SK-N-SH (cell line): ENCODE measurements at regions of chr11 and their contacts with region 1.

Region 1: DNA sequence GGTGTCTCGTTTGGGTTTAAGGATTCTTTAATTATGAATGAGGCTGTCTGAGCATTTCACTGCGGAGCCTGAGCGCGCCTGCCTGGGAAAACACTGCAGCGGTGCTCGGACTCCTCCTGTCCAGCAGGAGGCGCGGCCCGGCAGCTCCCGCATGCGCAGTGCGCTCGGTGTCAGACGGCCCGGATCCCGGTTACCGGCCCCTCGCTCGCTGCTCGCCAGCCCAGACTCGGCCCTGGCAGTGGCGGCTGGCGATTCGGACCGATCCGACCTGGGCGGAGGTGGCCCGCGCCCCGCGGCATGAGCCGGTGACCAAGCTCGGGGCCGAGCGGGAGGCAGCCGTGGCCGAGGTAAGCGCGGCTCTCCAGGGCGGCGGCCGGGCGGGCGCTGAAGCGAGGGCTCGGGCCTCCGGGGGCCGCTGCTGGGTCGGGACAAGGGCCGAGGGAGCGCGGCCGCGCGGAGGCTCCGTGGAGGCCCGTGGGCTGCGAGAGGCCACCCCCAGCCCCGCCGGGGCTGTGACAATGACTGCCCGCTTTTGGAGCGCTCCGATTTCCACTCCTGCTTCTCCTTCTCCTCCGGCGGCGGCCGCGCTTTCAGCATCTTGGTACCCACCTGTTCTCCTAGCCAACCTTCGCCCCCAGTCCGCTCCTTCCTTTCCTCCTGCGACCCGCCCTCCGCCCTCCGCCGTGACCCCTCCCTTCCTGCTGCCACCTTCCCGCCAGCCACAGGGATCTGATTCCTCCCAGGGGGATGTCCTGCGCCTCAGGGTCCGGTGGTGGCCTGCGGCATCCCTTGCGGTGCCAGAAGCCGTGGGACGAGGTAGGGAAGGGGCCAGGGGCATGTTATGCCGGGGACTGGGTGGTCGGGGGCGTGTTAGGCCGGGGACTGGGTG is at the start of gene EXT2:
- DNase-seq: peak; percentile 97
- H3K4me3 ChIP-seq: peak within 1 kb of the TSS; percentile 71 to 91
- H3K27ac ChIP-seq: peak within 1 kb of the TSS; percentile 24 to 48; a peak in 2 of 4 replicates
- H3K4me1 ChIP-seq: peaks cover 3 to 9% of the 10 kb centered on the region in 2 experiments; a peak in 3 of 4 replicates
- H3K27me3 ChIP-seq: no peaks in the 10 kb centered on the region
- CTCF ChIP-seq: peak; percentile 80
- EP300 ChIP-seq: no peak
- RAD21 ChIP-seq: no peak
- polyA plus RNA-seq, gene EXT2: 92.9 and 96.7 TPM in 2 replicates

Region 2: DNA sequence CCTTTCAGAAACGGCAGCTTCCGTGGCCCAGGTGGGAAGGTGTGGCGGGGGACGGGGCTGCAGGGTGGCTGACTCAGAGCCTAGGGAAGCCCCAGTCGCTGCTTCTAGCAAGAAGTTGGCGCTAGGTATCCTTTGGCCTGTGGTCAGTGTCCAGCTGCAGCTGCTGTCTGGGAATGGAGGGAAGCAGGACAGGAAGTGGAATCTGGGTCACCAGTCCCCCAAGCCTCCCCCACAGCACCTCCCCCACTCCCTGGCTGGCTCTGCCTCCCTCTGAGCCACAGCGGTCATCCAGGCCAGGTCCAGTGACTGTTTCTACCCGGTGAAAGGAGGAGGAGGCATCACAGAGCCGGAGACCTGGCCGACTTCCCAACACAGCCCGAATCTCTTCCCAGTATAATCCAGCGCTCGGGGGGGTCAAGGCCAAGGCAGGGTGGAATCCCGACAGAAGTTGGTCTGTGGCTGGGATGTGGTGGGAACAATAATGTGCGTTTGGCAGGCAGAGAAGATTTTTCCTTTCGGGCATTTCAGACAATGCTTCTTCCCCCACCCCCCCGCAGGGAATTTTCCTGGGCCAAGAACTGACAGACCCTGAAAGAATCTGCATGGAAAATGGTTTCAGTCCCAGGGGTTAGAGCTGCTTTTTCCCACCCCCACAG is 108.2 kb before region 1 on chr11:
- CTCF ChIA-PET with region 1: no interaction called
- POLR2A ChIA-PET with region 1: no interaction called
- DNase-seq: peak; percentile 88
- H3K4me3 ChIP-seq: peak overlapping the region in 1 of 2 experiments; percentile 15; a peak in 1 of 4 replicates
- H3K27ac ChIP-seq: peak overlapping the region; percentile 79 to 96
- H3K4me1 ChIP-seq: peaks cover 12 to 59% of the 10 kb centered on the region in 2 experiments; a peak in 3 of 4 replicates
- H3K27me3 ChIP-seq: peaks cover 8% of the 10 kb centered on the region; the same call in 1 of the 2 replicates
- CTCF ChIP-seq: no peak
- EP300 ChIP-seq: peak; percentile 45 to 80; a peak in 3 of 4 replicates
- RAD21 ChIP-seq: peak; percentile 41

Region 3: DNA sequence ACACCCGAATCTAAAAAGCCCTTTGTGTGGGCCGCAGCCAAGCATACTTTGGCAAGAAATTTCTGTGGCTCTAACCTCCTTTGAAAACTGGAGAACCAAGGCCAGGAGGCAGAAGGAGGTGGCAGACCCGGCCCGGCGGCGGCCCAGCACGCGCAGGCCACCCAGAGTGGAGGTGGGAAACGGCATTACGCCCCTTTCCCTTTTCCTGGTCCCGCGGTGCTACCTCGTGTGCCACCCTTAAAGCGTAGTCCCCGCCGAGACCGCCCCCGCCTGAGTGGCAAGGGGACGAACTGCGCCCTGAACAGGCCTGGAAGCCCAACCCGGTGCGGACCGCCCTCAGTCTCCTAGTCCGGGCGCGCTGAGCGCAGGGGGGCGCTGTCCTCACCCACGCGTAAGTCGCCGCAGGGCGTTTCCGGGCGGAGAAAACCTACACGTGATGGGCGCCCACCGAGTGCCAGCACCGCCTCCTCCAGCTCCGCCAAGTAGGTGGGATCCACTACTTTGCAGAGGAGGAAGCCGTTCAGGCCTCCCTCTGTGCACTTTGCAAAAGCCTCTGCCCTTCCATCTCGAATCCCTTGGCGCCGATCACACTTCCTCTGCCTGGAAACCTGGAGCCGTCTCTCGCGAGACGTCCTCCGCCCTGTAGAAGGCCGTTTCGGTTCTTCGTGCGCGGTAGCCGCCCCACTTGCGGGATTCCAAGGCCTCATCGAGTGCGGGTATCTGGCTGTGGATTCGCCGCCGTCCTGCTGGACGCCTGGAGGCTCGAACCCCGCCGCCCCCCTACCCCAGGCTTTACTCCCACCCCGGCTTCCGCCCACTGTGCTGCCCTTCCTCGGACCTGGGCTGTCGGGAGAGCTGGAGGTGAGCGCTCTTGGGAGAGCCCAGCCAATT is 29.7 kb before region 1 on chr11 and contains the start of gene ACCS:
- CTCF ChIA-PET with region 1: interaction called, 71 read pairs
- POLR2A ChIA-PET with region 1: no interaction called
- DNase-seq: peak; percentile 91
- H3K4me3 ChIP-seq: peak within 1 kb of the TSS; percentile 54 to 67
- H3K27ac ChIP-seq: peak within 1 kb of the TSS; percentile 86 to 88
- H3K4me1 ChIP-seq: peaks cover 0 to 2% of the 10 kb centered on the region in 2 experiments; a peak in 2 of 4 replicates
- H3K27me3 ChIP-seq: no peaks in the 10 kb centered on the region
- CTCF ChIP-seq: peak; percentile 56
- EP300 ChIP-seq: no peak
- RAD21 ChIP-seq: peak; percentile 17; the same call in 1 of the 2 replicates
- polyA plus RNA-seq, gene ACCS: 28.5 and 36.9 TPM in 2 replicates

Region 4: DNA sequence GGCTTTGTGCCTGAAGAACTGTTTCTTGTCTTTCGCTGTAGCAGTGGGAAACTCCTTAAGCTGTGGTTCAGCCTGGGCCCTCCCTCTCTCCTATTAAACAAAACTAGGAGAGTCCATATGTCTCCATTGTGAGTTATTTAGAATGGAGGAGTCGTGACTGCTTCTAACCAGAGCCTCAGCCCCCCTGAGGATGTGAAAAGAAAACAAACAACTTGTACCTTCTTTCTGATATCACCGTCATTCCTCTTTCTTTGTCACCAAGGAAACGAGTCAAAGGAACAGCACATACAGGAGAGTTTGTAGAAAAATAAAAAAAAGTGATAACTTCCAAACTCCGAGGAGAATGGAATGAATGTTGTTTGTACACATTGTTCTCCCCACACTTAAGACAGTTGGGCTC is 11.8 kb before region 1 on chr11:
- CTCF ChIA-PET with region 1: interaction called, 27 read pairs
- POLR2A ChIA-PET with region 1: no interaction called
- DNase-seq: no peak
- H3K4me3 ChIP-seq: no peak overlapping the region
- H3K27ac ChIP-seq: no peak overlapping the region
- H3K4me1 ChIP-seq: no peaks in the 10 kb centered on the region
- H3K27me3 ChIP-seq: no peaks in the 10 kb centered on the region
- CTCF ChIP-seq: no peak
- EP300 ChIP-seq: no peak
- RAD21 ChIP-seq: no peak

Region 5: GRCh38 chr11:44110231-44110679 is 14.5 kb after region 1 on chr11:
- CTCF ChIA-PET with region 1: interaction called, 88 read pairs
- POLR2A ChIA-PET with region 1: no interaction called
- DNase-seq: peak; percentile 65
- H3K4me3 ChIP-seq: no peak overlapping the region
- H3K27ac ChIP-seq: no peak overlapping the region
- H3K4me1 ChIP-seq: peaks cover 14 to 16% of the 10 kb centered on the region in 2 experiments; a peak in 3 of 4 replicates
- H3K27me3 ChIP-seq: no peaks in the 10 kb centered on the region
- CTCF ChIP-seq: peak; percentile 88
- EP300 ChIP-seq: no peak
- RAD21 ChIP-seq: peak; percentile 89

Region 6: GRCh38 chr11:44120169-44120568 is 24.4 kb after region 1 on chr11:
- CTCF ChIA-PET with region 1: interaction called, 31 read pairs
- POLR2A ChIA-PET with region 1: no interaction called
- DNase-seq: peak; percentile 18
- H3K4me3 ChIP-seq: no peak overlapping the region
- H3K27ac ChIP-seq: no peak overlapping the region
- H3K4me1 ChIP-seq: peaks cover 0 to 2% of the 10 kb centered on the region in 2 experiments; a peak in 3 of 4 replicates
- H3K27me3 ChIP-seq: no peaks in the 10 kb centered on the region
- CTCF ChIP-seq: peak; percentile 36; the same call in 1 of the 2 replicates
- EP300 ChIP-seq: no peak
- RAD21 ChIP-seq: peak; percentile 48

Region 7: DNA sequence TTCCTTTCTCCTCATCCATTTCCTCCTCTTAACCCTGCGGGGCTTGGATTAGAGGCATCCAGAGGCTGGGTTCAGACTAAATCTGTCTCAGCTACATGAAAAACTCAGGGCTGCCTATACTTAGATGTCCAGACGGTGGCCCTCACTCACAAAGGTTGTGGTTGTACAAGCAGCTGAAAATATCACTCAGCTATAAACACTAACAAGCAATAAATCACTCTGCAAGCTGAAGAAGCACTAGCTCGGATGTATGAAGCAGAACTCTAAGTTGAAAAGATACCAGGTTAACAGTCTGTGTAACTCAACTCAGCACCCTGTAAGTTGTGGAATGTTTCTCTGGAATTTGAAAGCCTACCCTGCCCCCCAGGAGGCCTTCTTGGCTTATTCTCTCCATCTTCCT is 82.6 kb after region 1 on chr11:
- CTCF ChIA-PET with region 1: interaction called, 10 read pairs
- POLR2A ChIA-PET with region 1: no interaction called
- DNase-seq: no peak
- H3K4me3 ChIP-seq: no peak overlapping the region
- H3K27ac ChIP-seq: no peak overlapping the region
- H3K4me1 ChIP-seq: peaks cover 5 to 39% of the 10 kb centered on the region in 2 experiments; a peak in 3 of 4 replicates
- H3K27me3 ChIP-seq: no peaks in the 10 kb centered on the region
- CTCF ChIP-seq: no peak
- EP300 ChIP-seq: no peak
- RAD21 ChIP-seq: no peak

Region 8: GRCh38 chr11:44538375-44539054 is 442.8 kb after region 1 on chr11:
- CTCF ChIA-PET with region 1: interaction called, 25 read pairs
- POLR2A ChIA-PET with region 1: no interaction called
- DNase-seq: peak; percentile 90
- H3K4me3 ChIP-seq: peak overlapping the region in 1 of 2 experiments; percentile 17; a peak in 1 of 4 replicates
- H3K27ac ChIP-seq: no peak overlapping the region
- H3K4me1 ChIP-seq: peaks cover 0 to 2% of the 10 kb centered on the region in 2 experiments; a peak in 1 of 4 replicates
- H3K27me3 ChIP-seq: no peaks in the 10 kb centered on the region
- CTCF ChIP-seq: peak; percentile 93
- EP300 ChIP-seq: no peak
- RAD21 ChIP-seq: peak; percentile 99